CD4-positive, alpha-beta memory T cell (primary cell): ENCODE measurements at regions of chr11 and their contacts with region 1.

Region 1: GRCh38 chr11:62573592-62574362 is at the start of gene EEF1G:
- DNase-seq: peak; percentile 98 to 100 (median 100)
- H3K4me3 ChIP-seq: peak within 1 kb of the TSS; percentile 89 to 100
- H3K4me3 Mint-ChIP-seq: peak within 1 kb of the TSS; percentile 92 to 98 (median 98)
- H3K27ac ChIP-seq: peak within 1 kb of the TSS; percentile 77
- H3K27ac Mint-ChIP-seq: peak within 1 kb of the TSS; percentile 94 to 98 (median 97)
- H3K4me1 ChIP-seq: peaks cover 44% of the 10 kb centered on the region
- H3K4me1 Mint-ChIP-seq: peaks cover 34 to 60% (median 47%) of the 10 kb centered on the region in 4 donors
- H3K27me3 ChIP-seq: no peaks in the 10 kb centered on the region
- H3K27me3 Mint-ChIP-seq: no peaks in the 10 kb centered on the region
- total RNA-seq, gene EEF1G: 1,815 to 1,855 TPM

Region 2: DNA sequence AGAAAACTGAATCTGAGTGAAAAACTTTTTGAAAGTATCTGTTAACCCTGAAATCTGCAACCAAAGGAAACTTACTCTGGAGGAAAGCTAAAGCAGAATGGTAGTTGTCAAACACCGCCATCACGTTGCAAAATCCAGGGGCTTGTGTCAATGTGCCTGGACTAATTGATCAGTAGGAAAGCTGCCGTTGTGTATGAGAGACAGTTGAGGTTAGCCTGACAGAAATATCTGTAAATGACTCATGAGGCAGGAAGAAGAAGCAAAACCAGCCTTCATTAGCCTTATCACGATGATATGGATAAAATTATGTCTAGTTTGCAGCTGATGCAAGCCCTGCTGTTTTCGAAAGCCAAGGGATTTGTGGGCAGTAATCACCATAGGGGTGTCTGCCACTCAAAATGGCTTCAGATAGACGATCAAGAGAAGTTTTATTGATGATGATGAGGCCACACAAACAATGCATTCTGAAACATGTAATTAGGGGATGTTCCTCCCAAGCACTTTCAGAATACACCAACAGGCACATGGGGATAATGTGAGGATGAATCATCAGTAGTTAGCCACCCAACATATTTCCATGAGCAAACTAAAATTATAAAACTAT is 146.0 kb before region 1 on chr11:
- CTCF ChIA-PET with region 1: interaction called, 14 read pairs
- POLR2A ChIA-PET with region 1: interaction called, 13 read pairs
- intact Hi-C with region 1: no loop called
- DNase-seq: peak in 1 of 5 donors; percentile 5
- H3K4me3 ChIP-seq: no peak overlapping the region
- H3K4me3 Mint-ChIP-seq: peak overlapping the region in 7 of 8 donors; percentile 11 to 84 (median 55)
- H3K27ac ChIP-seq: no peak overlapping the region
- H3K27ac Mint-ChIP-seq: peak overlapping the region; percentile 68 to 94 (median 89)
- H3K4me1 ChIP-seq: peaks cover 45% of the 10 kb centered on the region
- H3K4me1 Mint-ChIP-seq: peaks cover 20 to 42% (median 32%) of the 10 kb centered on the region in 4 donors
- H3K27me3 ChIP-seq: no peaks in the 10 kb centered on the region
- H3K27me3 Mint-ChIP-seq: no peaks in the 10 kb centered on the region

Region 3: DNA sequence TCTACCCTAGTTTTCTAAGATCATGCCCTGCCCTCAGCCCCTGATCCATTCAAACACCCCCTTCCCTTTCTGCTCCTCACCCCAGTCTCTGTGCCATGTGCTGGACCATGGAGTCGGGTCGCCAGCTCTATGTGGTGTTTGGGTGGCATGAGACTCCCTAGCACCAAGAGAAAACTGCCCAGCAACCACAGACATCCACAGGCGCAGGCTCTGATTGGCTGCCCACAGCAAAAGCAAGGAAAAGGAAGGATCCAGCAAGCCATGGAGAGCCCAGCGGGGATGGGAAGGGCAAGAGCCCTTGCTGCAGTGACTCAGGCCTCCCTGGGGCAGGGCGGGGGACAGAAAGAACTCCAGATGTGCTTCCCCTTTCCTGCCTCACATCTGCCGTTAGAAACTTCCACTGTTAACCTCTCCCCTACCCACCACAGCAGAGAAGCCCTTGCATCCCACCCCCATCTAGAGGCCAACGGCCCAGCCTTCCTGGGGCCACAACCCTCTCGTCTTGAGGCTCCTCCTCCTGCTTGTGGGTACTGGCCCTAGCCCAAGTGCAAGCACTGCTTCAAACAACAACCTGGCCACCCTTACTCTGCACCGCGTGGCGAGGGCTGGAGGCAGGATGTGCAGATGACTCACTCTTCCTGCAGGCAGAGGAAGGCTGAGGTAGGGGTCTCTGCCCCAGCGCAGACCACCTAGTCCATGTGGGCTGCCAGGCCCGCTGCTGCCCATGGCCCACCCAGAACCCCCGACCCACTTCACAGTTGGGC is 17.5 kb before region 1 on chr11:
- CTCF ChIA-PET with region 1: interaction called, 24 read pairs
- POLR2A ChIA-PET with region 1: interaction called, 120 read pairs
- intact Hi-C with region 1: loop called (anchors 1 kb)
- DNase-seq: peak; percentile 85 to 97 (median 87)
- H3K4me3 ChIP-seq: peak overlapping the region; percentile 37 to 75
- H3K4me3 Mint-ChIP-seq: peak overlapping the region; percentile 82 to 91 (median 90)
- H3K27ac ChIP-seq: peak overlapping the region; percentile 95
- H3K27ac Mint-ChIP-seq: peak overlapping the region; percentile 98 to 100 (median 100)
- H3K4me1 ChIP-seq: peaks cover 98% of the 10 kb centered on the region
- H3K4me1 Mint-ChIP-seq: peaks cover 73 to 97% (median 85%) of the 10 kb centered on the region in 4 donors
- H3K27me3 ChIP-seq: no peaks in the 10 kb centered on the region
- H3K27me3 Mint-ChIP-seq: peaks cover 0 to 2% of the 10 kb centered on the region in 2 donors

Region 4: GRCh38 chr11:62612366-62613290 is 38.9 kb after region 1 on chr11 and contains the starts of genes EML3 and ROM1:
- CTCF ChIA-PET with region 1: no interaction called
- POLR2A ChIA-PET with region 1: interaction called, 13 read pairs
- intact Hi-C with region 1: loop called (anchors 2 kb)
- DNase-seq: peak; percentile 85 to 88 (median 86)
- H3K4me3 ChIP-seq: peak within 1 kb of the TSS; percentile 73 to 93
- H3K4me3 Mint-ChIP-seq: peak within 1 kb of the TSS; percentile 89 to 100 (median 96)
- H3K27ac ChIP-seq: peak within 1 kb of the TSS; percentile 90
- H3K27ac Mint-ChIP-seq: peak within 1 kb of the TSS; percentile 94 to 98 (median 96)
- H3K4me1 ChIP-seq: peaks cover 59% of the 10 kb centered on the region
- H3K4me1 Mint-ChIP-seq: peaks cover 15 to 53% (median 38%) of the 10 kb centered on the region in 4 donors
- H3K27me3 ChIP-seq: no peaks in the 10 kb centered on the region
- H3K27me3 Mint-ChIP-seq: no peaks in the 10 kb centered on the region
- total RNA-seq, gene EML3: 192 to 201 TPM
- total RNA-seq, gene ROM1: 1.6 to 1.9 TPM

Region 5: GRCh38 chr11:62652161-62653006 is 78.6 kb after region 1 on chr11:
- CTCF ChIA-PET with region 1: no interaction called
- POLR2A ChIA-PET with region 1: interaction called, 11 read pairs
- intact Hi-C with region 1: no loop called
- DNase-seq: peak in 3 of 5 donors; percentile 54 to 83 (median 68)
- H3K4me3 ChIP-seq: peak overlapping the region; percentile 92 to 97
- H3K4me3 Mint-ChIP-seq: peak overlapping the region; percentile 86 to 94 (median 92)
- H3K27ac ChIP-seq: peak overlapping the region; percentile 93
- H3K27ac Mint-ChIP-seq: peak overlapping the region; percentile 78 to 100 (median 94)
- H3K4me1 ChIP-seq: peaks cover 24% of the 10 kb centered on the region
- H3K4me1 Mint-ChIP-seq: peaks cover 13 to 40% (median 22%) of the 10 kb centered on the region in 4 donors
- H3K27me3 ChIP-seq: no peaks in the 10 kb centered on the region
- H3K27me3 Mint-ChIP-seq: no peaks in the 10 kb centered on the region